ENCODE measurements at regions of chr2 and their contacts with region 1.

Region 1: DNA sequence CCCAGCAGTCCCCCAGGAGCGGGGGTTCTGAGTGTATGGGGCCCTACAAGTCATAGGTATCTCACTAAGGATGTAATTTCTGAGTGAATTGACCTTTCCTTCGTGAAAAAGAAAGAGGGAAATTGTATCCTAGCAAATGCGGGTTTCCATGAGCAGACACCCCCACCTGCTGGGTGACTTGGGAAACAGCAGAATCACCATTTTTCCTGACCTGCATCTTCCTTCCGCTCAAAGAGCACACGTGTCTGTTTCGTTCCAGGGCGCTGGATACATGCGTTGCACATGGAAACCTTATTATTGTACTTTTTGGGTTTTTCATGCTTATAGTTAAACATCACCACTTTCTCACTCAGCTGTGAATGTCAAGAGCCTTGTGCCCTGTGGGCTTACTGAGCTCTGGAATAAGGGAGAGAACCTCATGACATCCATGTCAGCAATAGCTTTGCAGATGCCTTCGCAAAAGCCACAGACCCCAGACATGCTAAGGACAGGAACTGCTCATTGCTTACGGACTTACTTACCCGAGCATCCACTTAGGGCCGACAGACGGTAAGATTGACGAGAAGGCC is 132.8 kb downstream of the TPO start:
- DNase-seq: peak; percentile 17
- H3K4me3 Mint-ChIP-seq: no peak overlapping the region
- H3K27ac Mint-ChIP-seq: no peak overlapping the region
- H3K4me1 Mint-ChIP-seq: peaks cover 3% of the 10 kb centered on the region
- H3K27me3 Mint-ChIP-seq: no peaks in the 10 kb centered on the region

Region 2: DNA sequence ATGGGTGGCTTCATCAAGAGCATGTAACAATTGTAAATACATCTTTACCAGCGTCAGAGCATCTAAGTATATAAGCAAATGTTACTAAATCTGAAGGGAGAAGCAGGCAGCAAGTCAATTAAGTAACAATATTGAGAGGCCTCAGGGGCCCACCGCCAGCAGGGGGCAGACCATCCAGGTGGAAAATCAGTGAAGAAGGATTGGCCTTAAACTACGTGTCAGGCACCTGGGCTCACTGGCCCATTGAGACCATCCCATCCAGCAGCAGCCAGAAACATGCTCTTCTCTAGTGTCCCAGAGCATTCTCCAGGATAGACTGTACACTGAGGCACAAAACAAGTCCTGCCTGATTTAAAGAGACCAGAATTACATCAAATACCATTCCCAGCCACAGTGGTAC is 691.6 kb before region 1 on chr2:
- intact Hi-C with region 1: loop called (anchors 10 kb)
- DNase-seq: peak; percentile 15
- H3K4me3 Mint-ChIP-seq: no peak overlapping the region
- H3K27ac Mint-ChIP-seq: no peak overlapping the region
- H3K4me1 Mint-ChIP-seq: peaks cover 18% of the 10 kb centered on the region
- H3K27me3 Mint-ChIP-seq: no peaks in the 10 kb centered on the region

Region 3: GRCh38 chr2:946073-946948 is 599.8 kb before region 1 on chr2:
- intact Hi-C with region 1: loop called (anchors 10 kb)
- DNase-seq: no peak
- H3K4me3 Mint-ChIP-seq: no peak overlapping the region
- H3K27ac Mint-ChIP-seq: no peak overlapping the region
- H3K4me1 Mint-ChIP-seq: peaks cover 14% of the 10 kb centered on the region
- H3K27me3 Mint-ChIP-seq: peaks cover 24% of the 10 kb centered on the region

Region 4: DNA sequence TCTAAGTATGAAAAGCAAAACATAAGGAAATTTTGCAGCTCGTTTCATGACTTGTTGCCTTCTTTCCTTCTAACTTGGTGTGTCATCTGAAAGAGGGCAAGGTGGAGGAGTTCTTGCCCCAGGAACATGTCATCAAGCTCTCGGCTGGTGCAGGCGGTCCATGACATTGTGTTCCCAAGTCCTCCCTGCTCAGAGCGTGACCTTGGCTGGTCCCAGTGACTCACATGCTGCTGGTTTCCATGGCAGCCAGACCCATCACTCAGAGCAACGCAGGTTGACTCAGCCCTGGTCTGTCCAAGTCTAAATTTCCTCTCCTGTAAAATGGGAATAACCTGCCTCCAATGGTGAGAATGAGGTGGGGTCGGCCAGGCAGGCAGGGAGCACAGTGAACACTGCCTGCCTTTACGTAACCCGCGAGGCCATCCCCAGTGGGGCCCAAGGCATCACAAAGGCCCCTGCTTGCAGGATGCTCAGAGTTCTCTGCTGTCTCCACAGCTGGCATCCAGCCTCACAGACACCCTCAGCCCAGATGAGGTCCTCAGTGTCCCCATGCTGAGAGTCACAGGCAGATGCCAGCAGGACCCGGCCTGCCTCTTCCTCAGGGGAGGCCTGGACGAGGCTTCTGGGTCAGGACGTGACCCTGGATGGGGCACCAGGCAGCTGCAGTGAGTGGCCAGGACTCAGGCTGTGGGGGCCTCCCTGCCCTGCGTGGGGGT is 10.8 kb after region 1 on chr2:
- intact Hi-C with region 1: no loop called
- DNase-seq: no peak
- H3K4me3 Mint-ChIP-seq: no peak overlapping the region
- H3K27ac Mint-ChIP-seq: no peak overlapping the region
- H3K4me1 Mint-ChIP-seq: no peaks in the 10 kb centered on the region
- H3K27me3 Mint-ChIP-seq: peaks cover 10% of the 10 kb centered on the region